B cell (primary cell): ENCODE measurements at regions of chr14 and their contacts with region 1.

Region 1: GRCh38 chr14:91009501-91010152 is 50.8 kb downstream of the RPS6KA5 start:
- DNase-seq: peak; percentile 90
- ATAC-seq: peak; percentile 90
- H3K4me3 ChIP-seq: peak overlapping the region in 3 of 5 experiments; percentile 12 to 49 (median 21)
- H3K4me3 Mint-ChIP-seq: peak overlapping the region; percentile 75
- H3K27ac ChIP-seq: peak overlapping the region; percentile 73 to 90
- H3K27ac Mint-ChIP-seq: peak overlapping the region; percentile 92
- H3K4me1 ChIP-seq: peaks cover 61 to 69% of the 10 kb centered on the region in 2 donors
- H3K4me1 Mint-ChIP-seq: peaks cover 52% of the 10 kb centered on the region
- H3K27me3 ChIP-seq: no peaks in the 10 kb centered on the region
- H3K27me3 Mint-ChIP-seq: no peaks in the 10 kb centered on the region
- CTCF ChIP-seq: no peak

Region 2: GRCh38 chr14:90995785-90996184 is 13.8 kb before region 1 on chr14:
- CTCF ChIA-PET with region 1: interaction called, 3 read pairs
- POLR2A ChIA-PET with region 1: interaction called, 6 read pairs
- intact Hi-C with region 1: loop called (anchors 2 kb)
- DNase-seq: peak; percentile 31
- ATAC-seq: no peak
- H3K4me3 ChIP-seq: no peak overlapping the region
- H3K4me3 Mint-ChIP-seq: peak overlapping the region; percentile 62
- H3K27ac ChIP-seq: peak overlapping the region in 1 of 2 donors; percentile 66
- H3K27ac Mint-ChIP-seq: peak overlapping the region; percentile 80
- H3K4me1 ChIP-seq: peaks cover 21 to 26% of the 10 kb centered on the region in 2 donors
- H3K4me1 Mint-ChIP-seq: peaks cover 44% of the 10 kb centered on the region
- H3K27me3 ChIP-seq: no peaks in the 10 kb centered on the region
- H3K27me3 Mint-ChIP-seq: no peaks in the 10 kb centered on the region
- CTCF ChIP-seq: no peak

Region 3: DNA sequence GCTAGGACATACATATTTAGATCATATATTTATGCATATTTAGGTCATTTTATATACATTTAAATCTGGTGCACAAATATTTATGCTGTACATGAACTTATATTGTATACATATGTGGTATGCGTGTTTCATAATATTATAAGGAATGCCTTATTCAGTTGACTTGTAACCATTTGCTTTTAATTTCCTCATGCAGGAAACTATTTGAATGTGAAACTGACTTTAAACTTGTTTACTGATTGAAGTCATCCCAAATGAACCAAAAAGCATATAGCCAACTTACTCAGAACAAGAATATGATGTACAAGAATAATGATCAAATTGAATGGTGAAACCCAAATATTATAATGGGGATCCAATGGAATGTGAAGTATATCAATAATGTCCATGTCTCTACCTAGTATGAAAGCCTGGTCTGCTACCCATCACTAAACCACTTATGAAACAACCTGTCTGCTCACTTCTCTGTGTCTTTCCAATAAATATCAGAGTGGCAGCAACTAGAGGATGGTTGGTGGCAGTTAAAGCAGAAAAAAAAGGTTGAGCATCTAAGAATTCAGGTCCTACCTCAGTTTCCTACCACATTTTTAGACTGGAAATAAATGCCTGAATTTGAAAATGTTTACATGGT is 12.5 kb after region 1 on chr14:
- CTCF ChIA-PET with region 1: interaction called, 4 read pairs
- POLR2A ChIA-PET with region 1: interaction called, 13 read pairs
- intact Hi-C with region 1: loop called (anchors 1 kb)
- DNase-seq: no peak
- ATAC-seq: peak; percentile 61
- H3K4me3 ChIP-seq: peak overlapping the region; percentile 9 to 70 (median 41)
- H3K4me3 Mint-ChIP-seq: peak overlapping the region; percentile 92
- H3K27ac ChIP-seq: peak overlapping the region; percentile 59 to 89
- H3K27ac Mint-ChIP-seq: peak overlapping the region; percentile 99
- H3K4me1 ChIP-seq: peaks cover 34 to 39% of the 10 kb centered on the region in 2 donors
- H3K4me1 Mint-ChIP-seq: peaks cover 67% of the 10 kb centered on the region
- H3K27me3 ChIP-seq: no peaks in the 10 kb centered on the region
- H3K27me3 Mint-ChIP-seq: no peaks in the 10 kb centered on the region
- CTCF ChIP-seq: no peak

Region 4: DNA sequence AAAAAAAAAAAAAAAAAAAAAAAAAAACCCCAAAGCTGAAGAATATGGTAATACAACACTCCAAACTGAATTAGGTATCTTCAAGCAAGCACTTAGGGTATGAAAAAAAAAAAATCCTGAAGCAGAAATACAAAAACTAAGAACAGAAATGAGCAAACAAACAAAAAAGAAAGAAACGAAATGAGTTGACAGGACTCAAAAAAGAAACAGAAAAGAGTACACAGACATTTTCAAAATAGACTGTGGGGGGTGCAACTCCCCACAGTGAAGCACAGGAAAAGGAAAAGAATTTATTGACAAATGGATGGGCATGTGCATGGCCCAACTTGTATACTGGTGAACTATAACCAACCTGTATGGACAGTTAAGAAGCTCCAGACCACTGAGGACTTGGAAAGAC is 26.2 kb after region 1 on chr14:
- CTCF ChIA-PET with region 1: no interaction called
- POLR2A ChIA-PET with region 1: no interaction called
- intact Hi-C with region 1: no loop called
- DNase-seq: no peak
- ATAC-seq: no peak
- H3K4me3 ChIP-seq: no peak overlapping the region
- H3K4me3 Mint-ChIP-seq: no peak overlapping the region
- H3K27ac ChIP-seq: peak overlapping the region in 1 of 2 donors; percentile 21
- H3K27ac Mint-ChIP-seq: peak overlapping the region; percentile 23
- H3K4me1 ChIP-seq: peaks cover 19% of the 10 kb centered on the region in 2 donors
- H3K4me1 Mint-ChIP-seq: peaks cover 50% of the 10 kb centered on the region
- H3K27me3 ChIP-seq: no peaks in the 10 kb centered on the region
- H3K27me3 Mint-ChIP-seq: no peaks in the 10 kb centered on the region
- CTCF ChIP-seq: no peak

Region 5: GRCh38 chr14:91088585-91089235 is 79.1 kb after region 1 on chr14:
- CTCF ChIA-PET with region 1: no interaction called
- POLR2A ChIA-PET with region 1: no interaction called
- intact Hi-C with region 1: no loop called
- DNase-seq: no peak
- ATAC-seq: no peak
- H3K4me3 ChIP-seq: no peak overlapping the region
- H3K4me3 Mint-ChIP-seq: no peak overlapping the region
- H3K27ac ChIP-seq: no peak overlapping the region
- H3K27ac Mint-ChIP-seq: no peak overlapping the region
- H3K4me1 ChIP-seq: peaks cover 0 to 4% of the 10 kb centered on the region in 2 donors
- H3K4me1 Mint-ChIP-seq: peaks cover 7% of the 10 kb centered on the region
- H3K27me3 ChIP-seq: no peaks in the 10 kb centered on the region
- H3K27me3 Mint-ChIP-seq: no peaks in the 10 kb centered on the region
- CTCF ChIP-seq: no peak

Region 6: DNA sequence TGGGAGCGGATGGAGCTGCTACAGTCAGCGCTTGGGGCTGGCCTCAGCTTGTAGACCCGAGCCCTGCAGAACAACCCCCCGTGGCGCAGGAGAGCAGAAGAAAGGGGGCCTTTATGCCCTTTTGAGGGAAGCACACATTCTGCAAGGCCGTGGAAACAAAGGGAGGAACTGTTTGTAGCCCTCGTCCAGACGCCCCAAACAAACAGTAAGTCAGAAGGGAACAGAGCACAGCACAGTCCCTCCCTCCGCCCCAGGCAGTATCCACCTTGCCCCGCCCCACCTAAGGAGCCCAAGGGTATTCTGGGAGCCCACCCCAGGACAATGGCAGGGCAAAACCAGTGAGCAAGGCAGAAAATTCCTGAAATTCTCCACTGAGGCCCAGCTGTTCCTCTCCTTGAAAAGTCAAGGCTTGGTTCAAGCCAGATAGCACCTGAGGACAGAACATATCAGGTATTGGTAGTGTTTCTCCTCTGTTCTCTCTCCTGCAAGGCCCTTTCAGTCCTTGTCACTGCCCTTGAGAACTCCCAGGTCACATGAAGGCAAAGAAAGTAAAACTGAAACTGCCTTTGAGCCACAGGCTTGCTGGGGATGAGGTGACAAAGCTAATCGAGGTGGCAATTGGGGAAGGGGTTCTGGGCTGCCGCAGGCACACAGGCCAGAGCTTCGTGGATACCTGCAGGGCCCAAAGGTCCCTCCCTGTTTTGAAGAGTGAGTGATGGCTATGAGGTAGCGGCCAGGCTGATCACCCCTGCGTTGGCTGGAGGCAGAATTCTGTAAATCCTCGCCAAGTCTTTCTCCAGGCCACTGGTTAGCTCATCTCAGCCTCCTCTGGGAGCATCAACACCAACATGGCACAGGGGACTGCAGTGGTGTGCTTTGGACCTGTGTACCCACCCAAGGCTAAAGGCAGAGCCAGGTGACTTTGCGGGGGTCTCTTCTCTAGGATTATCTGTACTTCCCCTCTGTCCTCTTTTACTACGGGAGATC is 104.7 kb after region 1 on chr14:
- CTCF ChIA-PET with region 1: no interaction called
- POLR2A ChIA-PET with region 1: interaction called, 9 read pairs
- intact Hi-C with region 1: loop called (anchors 2 kb)
- DNase-seq: peak; percentile 85
- ATAC-seq: peak; percentile 80
- H3K4me3 ChIP-seq: peak overlapping the region; percentile 71 to 94 (median 82)
- H3K4me3 Mint-ChIP-seq: peak overlapping the region; percentile 93
- H3K27ac ChIP-seq: peak overlapping the region; percentile 89 to 95
- H3K27ac Mint-ChIP-seq: peak overlapping the region; percentile 98
- H3K4me1 ChIP-seq: peaks cover 35 to 50% of the 10 kb centered on the region in 2 donors
- H3K4me1 Mint-ChIP-seq: peaks cover 68% of the 10 kb centered on the region
- H3K27me3 ChIP-seq: no peaks in the 10 kb centered on the region
- H3K27me3 Mint-ChIP-seq: no peaks in the 10 kb centered on the region
- CTCF ChIP-seq: no peak

Region 7: GRCh38 chr14:91249841-91250616 is 240.4 kb after region 1 on chr14:
- CTCF ChIA-PET with region 1: no interaction called
- POLR2A ChIA-PET with region 1: interaction called, 6 read pairs
- intact Hi-C with region 1: loop called (anchors 10 kb)
- DNase-seq: peak; percentile 77
- ATAC-seq: peak; percentile 60
- H3K4me3 ChIP-seq: peak overlapping the region in 2 of 5 experiments; percentile 12 to 15
- H3K4me3 Mint-ChIP-seq: peak overlapping the region; percentile 77
- H3K27ac ChIP-seq: peak overlapping the region; percentile 57 to 69
- H3K27ac Mint-ChIP-seq: peak overlapping the region; percentile 96
- H3K4me1 ChIP-seq: peaks cover 41 to 48% of the 10 kb centered on the region in 2 donors
- H3K4me1 Mint-ChIP-seq: peaks cover 54% of the 10 kb centered on the region
- H3K27me3 ChIP-seq: no peaks in the 10 kb centered on the region
- H3K27me3 Mint-ChIP-seq: no peaks in the 10 kb centered on the region
- CTCF ChIP-seq: no peak